Endothelial cell of umbilical vein (primary cell): ENCODE measurements at regions of chr10 and their contacts with region 1.

Region 1: DNA sequence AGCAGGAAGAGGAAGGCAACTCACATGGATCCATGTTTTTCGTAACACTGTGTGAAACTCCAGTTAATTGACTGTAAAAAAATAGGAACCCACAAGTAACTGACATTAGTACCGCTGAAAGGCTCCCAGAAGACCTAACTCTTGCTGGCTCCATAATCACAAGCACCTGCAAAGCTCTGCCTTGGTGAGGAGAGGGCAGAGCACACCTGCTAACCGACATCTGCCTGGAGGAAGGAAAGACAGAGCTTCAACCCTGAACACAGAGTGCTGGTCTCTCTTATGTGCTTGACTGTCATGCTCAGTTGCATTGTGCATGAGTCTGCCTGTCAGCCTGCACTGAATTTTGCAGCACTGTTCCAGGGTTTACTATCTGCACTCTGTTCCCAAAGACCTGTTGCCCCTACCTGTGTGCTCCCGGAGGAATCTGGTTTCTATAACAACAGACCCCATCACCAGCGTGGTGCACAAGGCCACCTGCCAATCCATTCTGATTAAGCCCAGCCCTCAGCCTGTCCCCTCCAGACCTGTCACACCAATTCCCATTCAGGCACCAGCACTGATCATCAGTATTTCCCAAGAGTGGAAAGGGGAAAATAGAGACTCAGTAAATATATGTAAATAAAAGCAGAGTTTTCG is 63.1 kb upstream of the ANKRD1 start:
- DNase-seq: no peak
- H3K4me3 ChIP-seq: no peak overlapping the region
- H3K27ac ChIP-seq: no peak overlapping the region
- H3K4me1 ChIP-seq: no peaks in the 10 kb centered on the region
- H3K27me3 ChIP-seq: peaks cover 0 to 1% of the 10 kb centered on the region in 2 experiments
- CTCF ChIP-seq: no peak
- POLR2A ChIP-seq: no peak

Region 2: GRCh38 chr10:91013985-91014384 is 30.0 kb after region 1 on chr10:
- CTCF ChIA-PET with region 1: no interaction called
- POLR2A ChIA-PET with region 1: no interaction called
- dilution Hi-C with region 1: no loop called
- intact Hi-C with region 1: loop called (anchors 1 kb)
- DNase-seq: no peak
- H3K4me3 ChIP-seq: no peak overlapping the region
- H3K27ac ChIP-seq: no peak overlapping the region
- H3K4me1 ChIP-seq: no peaks in the 10 kb centered on the region
- H3K27me3 ChIP-seq: no peaks in the 10 kb centered on the region
- CTCF ChIP-seq: no peak
- POLR2A ChIP-seq: no peak